Activated CD4-positive, alpha-beta T cell treated with anti-CD3 and anti-CD28 coated beads, Interleukin-2, amount 10 ng/mL, durations not matched to agents 24 days and 14 days (primary cell): ENCODE measurements at regions of chr10 and their contacts with region 1.

Region 1: GRCh38 chr10:35133586-35133985 is 6.9 kb downstream of the CREM start:
- DNase-seq: no peak
- H3K4me3 Mint-ChIP-seq: peak overlapping the region; percentile 69
- H3K27ac Mint-ChIP-seq: peak overlapping the region; percentile 93
- H3K4me1 Mint-ChIP-seq: peaks cover 50% of the 10 kb centered on the region
- H3K27me3 Mint-ChIP-seq: no peaks in the 10 kb centered on the region

Region 2: GRCh38 chr10:35153716-35154479 is 20.3 kb after region 1 on chr10:
- intact Hi-C with region 1: loop called (anchors 1 kb)
- DNase-seq: no peak
- H3K4me3 Mint-ChIP-seq: no peak overlapping the region
- H3K27ac Mint-ChIP-seq: no peak overlapping the region
- H3K4me1 Mint-ChIP-seq: peaks cover 37% of the 10 kb centered on the region
- H3K27me3 Mint-ChIP-seq: no peaks in the 10 kb centered on the region

Region 3: GRCh38 chr10:35442028-35442427 is 308.4 kb after region 1 on chr10:
- intact Hi-C with region 1: loop called (anchors 2 kb)
- DNase-seq: no peak
- H3K4me3 Mint-ChIP-seq: no peak overlapping the region
- H3K27ac Mint-ChIP-seq: peak overlapping the region; percentile 80
- H3K4me1 Mint-ChIP-seq: peaks cover 33% of the 10 kb centered on the region
- H3K27me3 Mint-ChIP-seq: no peaks in the 10 kb centered on the region